Breast epithelium (tissue), 4 donors: ENCODE measurements at regions of chr15 and their contacts with region 1.

Region 1: GRCh38 chr15:81852411-81853149 is 193.2 kb downstream of the MEX3B start:
- DNase-seq: no peak
- H3K4me3 ChIP-seq: no peak overlapping the region
- H3K27ac ChIP-seq: no peak overlapping the region
- H3K4me1 ChIP-seq: no peaks in the 10 kb centered on the region
- H3K27me3 ChIP-seq: no peaks in the 10 kb centered on the region
- CTCF ChIP-seq: no peak
- POLR2A ChIP-seq: no peak

Region 2: GRCh38 chr15:81914734-81915256 is 62.2 kb after region 1 on chr15:
- intact Hi-C with region 1: loop called (anchors 10 kb)
- DNase-seq: no peak
- H3K4me3 ChIP-seq: no peak overlapping the region
- H3K27ac ChIP-seq: no peak overlapping the region
- H3K4me1 ChIP-seq: no peaks in the 10 kb centered on the region
- H3K27me3 ChIP-seq: no peaks in the 10 kb centered on the region
- CTCF ChIP-seq: no peak
- POLR2A ChIP-seq: no peak